IMR-90 (cell line): ENCODE measurements at regions of chr11 and their contacts with region 1.

Region 1: GRCh38 chr11:33742249-33742851 is 6.1 kb upstream of the CD59 start:
- DNase-seq: no peak
- ATAC-seq: peak; percentile 57
- H3K4me3 ChIP-seq: no peak overlapping the region
- H3K27ac ChIP-seq: no peak overlapping the region
- H3K4me1 ChIP-seq: peaks cover 12% of the 10 kb centered on the region
- H3K27me3 ChIP-seq: no peaks in the 10 kb centered on the region
- CTCF ChIP-seq: peak; percentile 54
- POLR2A ChIP-seq: no peak
- RAD21 ChIP-seq: peak; percentile 47

Region 2: DNA sequence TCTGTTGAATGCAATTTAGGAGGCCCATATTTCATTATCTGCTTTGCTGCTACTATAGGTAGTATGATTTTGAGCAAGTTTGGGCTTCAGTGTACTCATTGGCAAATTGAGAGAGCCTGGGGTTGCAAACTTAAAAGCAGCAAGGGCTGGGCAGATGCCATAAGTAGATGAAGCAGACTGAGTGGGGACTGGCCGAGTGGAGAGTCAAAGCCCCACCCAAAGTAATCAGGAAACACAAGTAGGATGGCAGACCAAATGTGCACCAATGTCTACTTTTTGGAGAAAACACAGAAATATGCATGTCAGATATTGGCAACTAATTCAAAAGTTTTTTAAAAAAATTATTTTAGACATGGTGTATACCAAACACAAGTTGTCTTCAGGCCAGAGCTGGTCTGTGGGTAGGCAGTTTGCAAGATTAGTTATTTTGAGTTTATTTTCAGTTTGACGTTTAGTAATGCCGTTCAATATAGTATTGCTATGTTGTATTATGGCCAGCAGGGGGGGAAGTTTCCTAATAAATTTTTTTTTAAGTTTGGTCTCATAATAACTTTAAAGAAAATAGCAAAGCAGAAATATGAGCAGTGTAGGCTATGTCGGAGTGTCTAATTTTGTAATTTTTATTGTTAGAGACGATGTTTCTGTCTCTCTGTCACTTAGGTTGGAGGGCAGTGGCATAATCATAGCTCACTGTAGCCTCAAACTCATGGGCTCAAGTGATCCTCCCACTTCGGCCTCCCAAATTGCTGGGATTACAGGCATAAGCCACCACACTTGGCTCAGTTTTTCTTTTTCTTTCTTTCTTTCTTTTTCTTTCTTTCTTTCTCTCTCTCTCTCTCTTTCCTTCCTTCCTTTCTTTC is 380.1 kb before region 1 on chr11:
- CTCF ChIA-PET with region 1: interaction called, 7 read pairs
- POLR2A ChIA-PET with region 1: no interaction called
- dilution Hi-C with region 1: no loop called
- in situ Hi-C with region 1: loop called (anchors 10 kb)
- intact Hi-C with region 1: loop called (anchors 2 kb)
- DNase-seq: peak; percentile 56
- ATAC-seq: peak; percentile 74
- H3K4me3 ChIP-seq: no peak overlapping the region
- H3K27ac ChIP-seq: no peak overlapping the region
- H3K4me1 ChIP-seq: no peaks in the 10 kb centered on the region; the same call in 1 of the 2 replicates
- H3K27me3 ChIP-seq: no peaks in the 10 kb centered on the region
- CTCF ChIP-seq: peak; percentile 76
- POLR2A ChIP-seq: no peak
- RAD21 ChIP-seq: peak; percentile 66

Region 3: DNA sequence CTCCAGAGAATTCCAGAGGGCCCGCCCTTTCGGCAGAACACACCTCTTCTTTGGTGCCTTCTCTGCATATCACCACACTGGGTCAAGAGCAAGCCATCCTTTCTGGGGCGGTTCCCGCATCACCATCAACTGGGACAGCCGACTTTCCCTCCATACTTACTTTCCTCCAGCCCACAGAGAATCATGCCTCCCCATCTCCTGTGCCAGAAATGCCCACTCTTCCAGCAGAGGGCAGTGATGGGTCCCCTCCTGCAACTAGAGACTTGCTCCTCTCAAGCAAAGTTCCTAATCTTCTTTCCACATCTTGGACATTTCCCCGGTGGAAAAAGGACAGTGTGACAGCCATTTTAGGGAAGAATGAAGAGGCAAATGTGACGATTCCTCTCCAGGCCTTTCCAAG is 199.4 kb before region 1 on chr11:
- CTCF ChIA-PET with region 1: interaction called, 5 read pairs
- POLR2A ChIA-PET with region 1: no interaction called
- dilution Hi-C with region 1: no loop called
- in situ Hi-C with region 1: no loop called
- intact Hi-C with region 1: loop called (anchors 2 kb)
- DNase-seq: peak; percentile 40
- ATAC-seq: peak; percentile 59; the same call in 1 of the 2 replicates
- H3K4me3 ChIP-seq: no peak overlapping the region
- H3K27ac ChIP-seq: no peak overlapping the region
- H3K4me1 ChIP-seq: peaks cover 2% of the 10 kb centered on the region; the same call in 1 of the 2 replicates
- H3K27me3 ChIP-seq: no peaks in the 10 kb centered on the region
- CTCF ChIP-seq: peak; percentile 61
- POLR2A ChIP-seq: no peak
- RAD21 ChIP-seq: peak; percentile 66

Region 4: DNA sequence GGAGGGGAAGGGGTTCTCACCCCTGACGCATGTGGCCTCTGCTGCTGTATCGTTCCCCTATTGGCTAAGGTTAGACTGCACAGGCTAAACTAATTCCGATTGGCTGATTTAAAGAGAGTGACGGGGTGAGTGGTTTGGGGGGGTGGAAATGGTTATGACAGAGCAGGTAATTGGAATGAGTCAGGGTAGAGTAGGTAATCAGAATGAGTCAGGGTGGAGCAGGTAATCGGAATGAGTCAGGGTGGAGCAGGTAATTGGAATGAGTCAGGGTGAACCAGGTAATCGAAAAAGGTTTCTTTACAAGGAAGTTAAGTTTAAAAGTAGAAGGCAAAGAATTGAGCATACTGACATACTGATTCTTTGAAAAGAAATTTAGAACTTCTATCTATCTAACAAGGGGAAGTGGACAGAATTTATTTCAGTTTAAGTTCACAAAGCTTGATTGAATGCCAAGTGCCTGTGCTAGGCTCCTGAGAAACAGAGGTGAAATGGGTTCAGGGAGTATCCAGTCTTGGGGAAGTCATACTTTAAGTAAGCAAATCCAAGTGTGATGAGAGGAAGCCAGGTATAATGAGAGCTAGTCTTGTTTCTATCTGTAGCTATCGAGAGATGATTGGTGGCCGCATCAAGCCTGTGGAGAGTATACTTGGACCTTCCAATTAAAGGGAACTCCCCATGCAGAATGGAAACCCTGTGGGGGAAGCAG is 99.7 kb before region 1 on chr11:
- CTCF ChIA-PET with region 1: no interaction called
- POLR2A ChIA-PET with region 1: no interaction called
- dilution Hi-C with region 1: no loop called
- in situ Hi-C with region 1: no loop called
- intact Hi-C with region 1: no loop called
- DNase-seq: no peak
- ATAC-seq: no peak
- H3K4me3 ChIP-seq: no peak overlapping the region
- H3K27ac ChIP-seq: no peak overlapping the region
- H3K4me1 ChIP-seq: peaks cover 4% of the 10 kb centered on the region
- H3K27me3 ChIP-seq: no peaks in the 10 kb centered on the region
- CTCF ChIP-seq: no peak
- POLR2A ChIP-seq: no peak
- RAD21 ChIP-seq: no peak

Region 5: GRCh38 chr11:33716236-33716635 is 26.1 kb before region 1 on chr11:
- CTCF ChIA-PET with region 1: interaction called, 12 read pairs
- POLR2A ChIA-PET with region 1: no interaction called
- dilution Hi-C with region 1: no loop called
- in situ Hi-C with region 1: no loop called
- intact Hi-C with region 1: no loop called
- DNase-seq: no peak
- ATAC-seq: no peak; the same call in 1 of the 2 replicates
- H3K4me3 ChIP-seq: no peak overlapping the region
- H3K27ac ChIP-seq: no peak overlapping the region
- H3K4me1 ChIP-seq: peaks cover 6% of the 10 kb centered on the region
- H3K27me3 ChIP-seq: no peaks in the 10 kb centered on the region
- CTCF ChIP-seq: peak; percentile 50
- POLR2A ChIP-seq: no peak
- RAD21 ChIP-seq: peak; percentile 37